A673 (cell line): ENCODE measurements at regions of chr17 and their contacts with region 1.

Region 1: GRCh38 chr17:58939785-58940413 is 166.8 kb downstream of the TRIM37 start:
- DNase-seq: no peak
- H3K4me3 ChIP-seq: no peak overlapping the region
- H3K27ac ChIP-seq: no peak overlapping the region
- H3K4me1 ChIP-seq: peaks cover 7% of the 10 kb centered on the region
- H3K27me3 ChIP-seq: no peaks in the 10 kb centered on the region
- CTCF ChIP-seq: no peak

Region 2: GRCh38 chr17:58417300-58418092 is 522.4 kb before region 1 on chr17 and contains the start of gene RNF43:
- CTCF ChIA-PET with region 1: interaction called, 12 read pairs
- POLR2A ChIA-PET with region 1: no interaction called
- intact Hi-C with region 1: no loop called
- DNase-seq: peak; percentile 90
- H3K4me3 ChIP-seq: peak within 1 kb of the TSS; percentile 26
- H3K27ac ChIP-seq: no peak within 1 kb of the TSS
- H3K4me1 ChIP-seq: no peaks in the 10 kb centered on the region
- H3K27me3 ChIP-seq: peaks cover 24% of the 10 kb centered on the region
- CTCF ChIP-seq: peak; percentile 85
- total RNA-seq, gene RNF43: 0.04 TPM in 1 of 2 replicates, not detected in the other